Panc1 (cell line): ENCODE measurements at regions of chr11 and their contacts with region 1.

Region 1: GRCh38 chr11:57162179-57162898 is 19.4 kb upstream of the LRRC55 start:
- DNase-seq: no peak
- ATAC-seq: no peak
- H3K4me3 ChIP-seq: no peak overlapping the region
- H3K27ac ChIP-seq: no peak overlapping the region
- H3K4me1 ChIP-seq: no peaks in the 10 kb centered on the region
- H3K27me3 ChIP-seq: peaks cover 2% of the 10 kb centered on the region; the same call in 1 of the 2 replicates
- CTCF ChIP-seq: no peak

Region 2: GRCh38 chr11:57174656-57175055 is 12.3 kb after region 1 on chr11:
- CTCF ChIA-PET with region 1: no interaction called
- POLR2A ChIA-PET with region 1: interaction called, 12 read pairs
- in situ Hi-C with region 1: no loop called
- intact Hi-C with region 1: no loop called
- DNase-seq: no peak
- ATAC-seq: no peak
- H3K4me3 ChIP-seq: no peak overlapping the region
- H3K27ac ChIP-seq: no peak overlapping the region
- H3K4me1 ChIP-seq: no peaks in the 10 kb centered on the region
- H3K27me3 ChIP-seq: peaks cover 10% of the 10 kb centered on the region; the same call in 1 of the 2 replicates
- CTCF ChIP-seq: no peak